CD8-positive, alpha-beta T cell (primary cell): ENCODE measurements at regions of chr5 and their contacts with region 1.

Region 1: DNA sequence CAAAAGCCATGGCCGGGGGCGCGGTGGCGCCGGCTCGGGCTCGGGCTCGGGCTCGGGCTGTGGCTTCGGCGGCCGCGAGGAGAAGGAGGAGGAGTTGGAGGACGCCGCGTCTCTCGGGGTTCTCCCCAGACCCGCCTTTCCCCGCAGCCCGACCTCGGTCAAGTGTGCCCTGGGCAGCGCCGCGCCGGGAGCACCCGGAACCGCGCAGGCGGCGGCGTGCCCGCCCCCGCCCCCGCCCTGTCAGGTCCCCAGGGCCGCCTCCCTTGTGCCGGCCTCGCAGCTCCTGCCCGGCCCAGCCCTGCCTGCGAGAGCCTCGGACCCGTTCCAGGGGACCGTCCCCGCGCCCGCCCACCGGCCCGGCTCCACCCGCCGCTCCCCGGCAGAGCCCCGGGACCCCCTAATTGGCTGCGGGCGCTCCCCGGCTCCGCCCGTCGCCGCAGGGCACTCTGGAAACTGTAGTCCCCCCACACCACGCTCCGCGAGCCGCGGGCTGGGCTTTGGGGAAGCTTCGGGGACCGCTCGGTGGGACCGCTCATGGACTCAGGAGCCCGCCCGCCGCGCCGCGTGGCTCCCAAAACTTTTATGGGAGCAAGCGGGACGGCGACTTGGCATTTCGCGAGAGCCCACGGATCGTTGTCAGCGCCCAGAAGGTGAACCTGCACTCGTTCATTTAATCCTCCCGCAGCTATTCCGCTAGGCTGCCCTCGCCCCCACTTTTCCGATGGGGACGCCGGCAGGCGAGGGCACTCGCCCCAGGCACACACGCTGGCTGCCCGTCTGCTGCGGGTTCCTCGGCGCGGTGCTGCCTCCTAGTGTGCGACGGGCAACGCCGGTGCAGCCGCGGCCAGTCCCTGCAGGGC is at the start of gene STK10:
- DNase-seq: peak; percentile 79 to 95 (median 89)
- ATAC-seq: peak; percentile 75
- H3K4me3 ChIP-seq: peak within 1 kb of the TSS; percentile 74 to 95
- H3K4me3 Mint-ChIP-seq: peak within 1 kb of the TSS; percentile 100
- H3K27ac ChIP-seq: peak within 1 kb of the TSS; percentile 84 to 97
- H3K27ac Mint-ChIP-seq: peak within 1 kb of the TSS; percentile 99
- H3K4me1 ChIP-seq: peaks cover 14% of the 10 kb centered on the region
- H3K4me1 Mint-ChIP-seq: peaks cover 32% of the 10 kb centered on the region
- H3K27me3 ChIP-seq: no peaks in the 10 kb centered on the region
- H3K27me3 Mint-ChIP-seq: no peaks in the 10 kb centered on the region
- CTCF ChIP-seq: peak; percentile 97
- total RNA-seq, gene STK10: 172 to 182 TPM

Region 2: DNA sequence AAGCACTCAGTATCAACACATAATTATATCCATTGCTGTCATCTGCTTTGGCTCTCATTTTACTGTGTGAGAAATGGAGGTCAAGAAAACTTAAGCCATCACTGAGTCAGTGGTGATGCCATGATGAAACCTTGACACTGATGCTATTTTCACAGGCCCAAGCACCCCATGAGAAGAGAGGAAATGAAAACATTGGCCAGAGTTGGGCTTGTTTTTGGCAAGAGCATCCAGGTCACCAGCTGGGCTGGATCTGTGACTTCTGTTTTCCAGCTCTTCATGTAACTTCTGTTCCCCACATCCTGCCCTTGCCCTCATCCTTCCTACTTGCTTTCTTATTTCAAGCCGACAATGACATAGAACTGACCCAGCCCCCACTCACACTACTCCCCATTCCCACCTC is 1900.7 kb before region 1 on chr5:
- CTCF ChIA-PET with region 1: no interaction called
- POLR2A ChIA-PET with region 1: no interaction called
- intact Hi-C with region 1: loop called in 1 of 2 experiments (anchors 10 kb)
- DNase-seq: peak in 1 of 9 experiments; percentile 48
- ATAC-seq: peak; percentile 3
- H3K4me3 ChIP-seq: no peak overlapping the region
- H3K4me3 Mint-ChIP-seq: peak overlapping the region; percentile 68
- H3K27ac ChIP-seq: peak overlapping the region in 1 of 2 experiments; percentile 86
- H3K27ac Mint-ChIP-seq: peak overlapping the region; percentile 97
- H3K4me1 ChIP-seq: peaks cover 99% of the 10 kb centered on the region
- H3K4me1 Mint-ChIP-seq: peaks cover 100% of the 10 kb centered on the region
- H3K27me3 ChIP-seq: no peaks in the 10 kb centered on the region
- H3K27me3 Mint-ChIP-seq: no peaks in the 10 kb centered on the region
- CTCF ChIP-seq: no peak

Region 3: GRCh38 chr5:171251519-171251918 is 936.7 kb before region 1 on chr5:
- CTCF ChIA-PET with region 1: no interaction called
- POLR2A ChIA-PET with region 1: no interaction called
- intact Hi-C with region 1: no loop called
- DNase-seq: no peak
- ATAC-seq: no peak
- H3K4me3 ChIP-seq: no peak overlapping the region
- H3K4me3 Mint-ChIP-seq: no peak overlapping the region
- H3K27ac ChIP-seq: no peak overlapping the region
- H3K27ac Mint-ChIP-seq: no peak overlapping the region
- H3K4me1 ChIP-seq: no peaks in the 10 kb centered on the region
- H3K4me1 Mint-ChIP-seq: no peaks in the 10 kb centered on the region
- H3K27me3 ChIP-seq: no peaks in the 10 kb centered on the region
- H3K27me3 Mint-ChIP-seq: peaks cover 8% of the 10 kb centered on the region
- CTCF ChIP-seq: no peak

Region 4: DNA sequence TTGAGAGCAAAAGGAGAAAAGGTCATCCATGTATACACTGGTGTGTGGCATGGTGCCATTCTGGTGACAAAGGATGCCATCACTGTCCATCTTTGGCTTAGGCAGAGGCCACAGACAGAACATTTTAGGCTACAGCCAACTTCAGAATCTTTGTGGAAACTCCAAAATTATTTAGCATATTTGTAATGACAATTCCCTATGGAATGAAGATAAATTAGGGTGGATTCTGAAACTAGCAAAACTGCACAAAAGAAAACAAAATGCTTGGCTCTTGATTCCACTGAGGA is 274.3 kb before region 1 on chr5:
- CTCF ChIA-PET with region 1: interaction called, 8 read pairs
- POLR2A ChIA-PET with region 1: no interaction called
- intact Hi-C with region 1: loop called (anchors 1 to 5 kb)
- DNase-seq: no peak
- ATAC-seq: no peak
- H3K4me3 ChIP-seq: no peak overlapping the region
- H3K4me3 Mint-ChIP-seq: no peak overlapping the region
- H3K27ac ChIP-seq: no peak overlapping the region
- H3K27ac Mint-ChIP-seq: peak overlapping the region; percentile 7
- H3K4me1 ChIP-seq: peaks cover 9% of the 10 kb centered on the region
- H3K4me1 Mint-ChIP-seq: peaks cover 45% of the 10 kb centered on the region
- H3K27me3 ChIP-seq: no peaks in the 10 kb centered on the region
- H3K27me3 Mint-ChIP-seq: no peaks in the 10 kb centered on the region
- CTCF ChIP-seq: no peak

Region 5: DNA sequence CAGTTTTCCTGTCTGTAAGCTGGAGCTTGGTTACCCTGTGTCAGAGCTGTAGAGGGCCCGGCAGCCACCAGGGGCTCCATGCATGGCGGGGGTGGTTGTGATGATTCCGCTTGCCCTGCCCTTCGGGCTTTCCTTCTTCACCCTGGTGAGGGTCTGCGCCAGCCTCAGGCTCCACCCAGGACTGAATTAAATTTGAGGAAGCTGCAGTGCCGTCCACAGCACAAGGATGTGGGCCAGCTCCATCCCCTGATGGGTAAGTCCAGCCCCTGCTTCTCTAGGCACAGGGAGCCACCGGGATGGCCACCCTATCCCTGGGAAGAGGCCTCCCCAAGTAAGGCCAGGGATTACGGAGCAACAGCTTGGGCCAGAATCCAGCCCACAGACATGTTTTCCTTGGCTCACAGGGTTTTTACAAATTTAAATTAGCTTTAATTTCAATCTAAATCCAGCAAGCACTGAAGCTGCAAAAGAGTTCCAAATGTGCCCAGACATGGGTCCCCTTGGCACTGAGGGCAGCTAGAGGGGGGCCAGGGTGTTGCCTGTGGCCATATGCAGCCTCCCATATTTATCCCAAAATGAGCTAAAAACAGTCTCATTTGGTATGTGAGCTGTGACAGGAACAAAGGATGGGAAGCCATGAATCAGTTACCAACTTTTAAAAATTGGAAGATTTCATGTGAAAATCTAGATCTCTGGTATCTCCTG is 92.6 kb before region 1 on chr5:
- CTCF ChIA-PET with region 1: interaction called, 197 read pairs
- POLR2A ChIA-PET with region 1: interaction called, 4 read pairs
- intact Hi-C with region 1: no loop called
- DNase-seq: no peak
- ATAC-seq: no peak
- H3K4me3 ChIP-seq: no peak overlapping the region
- H3K4me3 Mint-ChIP-seq: no peak overlapping the region
- H3K27ac ChIP-seq: no peak overlapping the region
- H3K27ac Mint-ChIP-seq: no peak overlapping the region
- H3K4me1 ChIP-seq: peaks cover 3% of the 10 kb centered on the region
- H3K4me1 Mint-ChIP-seq: peaks cover 10% of the 10 kb centered on the region
- H3K27me3 ChIP-seq: no peaks in the 10 kb centered on the region
- H3K27me3 Mint-ChIP-seq: no peaks in the 10 kb centered on the region
- CTCF ChIP-seq: no peak

Region 6: GRCh38 chr5:172133359-172134029 is 54.8 kb before region 1 on chr5:
- CTCF ChIA-PET with region 1: interaction called, 13 read pairs
- POLR2A ChIA-PET with region 1: interaction called, 3 read pairs
- intact Hi-C with region 1: no loop called
- DNase-seq: peak in 6 of 9 experiments; percentile 21 to 76 (median 52)
- ATAC-seq: peak; percentile 85
- H3K4me3 ChIP-seq: no peak overlapping the region
- H3K4me3 Mint-ChIP-seq: peak overlapping the region; percentile 58
- H3K27ac ChIP-seq: peak overlapping the region; percentile 1 to 70
- H3K27ac Mint-ChIP-seq: peak overlapping the region; percentile 95
- H3K4me1 ChIP-seq: peaks cover 31% of the 10 kb centered on the region
- H3K4me1 Mint-ChIP-seq: peaks cover 71% of the 10 kb centered on the region
- H3K27me3 ChIP-seq: no peaks in the 10 kb centered on the region
- H3K27me3 Mint-ChIP-seq: no peaks in the 10 kb centered on the region
- CTCF ChIP-seq: no peak

Region 7: GRCh38 chr5:172283020-172283861 is 95.0 kb after region 1 on chr5 and contains the start of gene UBTD2:
- CTCF ChIA-PET with region 1: interaction called, 7 read pairs
- POLR2A ChIA-PET with region 1: interaction called, 3 read pairs
- intact Hi-C with region 1: loop called (anchors 1 to 2 kb)
- DNase-seq: peak; percentile 44 to 85 (median 70)
- ATAC-seq: peak; percentile 76
- H3K4me3 ChIP-seq: peak within 1 kb of the TSS; percentile 76 to 78
- H3K4me3 Mint-ChIP-seq: peak within 1 kb of the TSS; percentile 88
- H3K27ac ChIP-seq: no peak within 1 kb of the TSS
- H3K27ac Mint-ChIP-seq: peak within 1 kb of the TSS; percentile 77
- H3K4me1 ChIP-seq: peaks cover 18% of the 10 kb centered on the region
- H3K4me1 Mint-ChIP-seq: peaks cover 26% of the 10 kb centered on the region
- H3K27me3 ChIP-seq: no peaks in the 10 kb centered on the region
- H3K27me3 Mint-ChIP-seq: no peaks in the 10 kb centered on the region
- CTCF ChIP-seq: peak; percentile 61
- total RNA-seq, gene UBTD2: 0.78 to 0.79 TPM

Region 8: DNA sequence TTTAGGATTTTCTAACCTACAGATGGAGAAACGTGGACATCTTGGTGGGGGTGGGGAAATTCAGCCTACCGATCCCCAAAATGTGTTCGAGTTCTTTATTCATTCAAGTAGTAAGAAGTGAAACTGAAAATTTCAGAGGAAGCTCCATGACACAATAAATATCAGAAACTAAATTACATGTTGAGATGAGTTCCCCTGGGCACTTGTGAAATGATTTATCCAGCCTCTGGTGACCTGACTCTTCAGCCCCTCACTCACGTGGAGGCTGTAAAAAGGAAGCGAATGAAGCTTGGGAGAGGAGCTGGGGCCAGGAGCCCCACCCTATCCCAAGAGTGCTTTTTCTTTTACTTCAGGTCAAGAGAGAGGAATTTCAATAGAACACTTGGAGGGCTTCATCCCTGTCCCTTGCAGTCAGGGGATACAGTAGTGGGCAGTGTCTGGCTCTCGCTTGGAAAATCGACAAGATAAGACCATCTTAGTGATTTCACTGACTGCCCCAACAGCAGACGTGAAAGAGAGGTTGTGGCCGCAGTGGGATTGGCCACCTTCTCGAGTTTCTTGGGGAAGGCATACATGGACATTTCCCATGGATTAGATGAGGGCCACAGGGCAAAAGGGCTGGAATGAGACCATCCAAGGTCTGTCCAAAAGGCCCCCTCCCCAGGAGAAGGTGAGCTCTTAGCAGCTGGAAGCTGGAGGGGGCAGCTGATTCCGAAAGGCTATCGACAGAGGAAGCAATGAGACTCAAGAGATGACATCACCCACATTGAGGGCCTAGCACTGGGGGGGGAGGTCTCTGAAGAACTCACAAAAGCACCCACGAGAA is 342.8 kb after region 1 on chr5:
- CTCF ChIA-PET with region 1: no interaction called
- POLR2A ChIA-PET with region 1: no interaction called
- intact Hi-C with region 1: no loop called
- DNase-seq: peak in 1 of 9 experiments; percentile 41
- ATAC-seq: no peak
- H3K4me3 ChIP-seq: no peak overlapping the region
- H3K4me3 Mint-ChIP-seq: no peak overlapping the region
- H3K27ac ChIP-seq: no peak overlapping the region
- H3K27ac Mint-ChIP-seq: no peak overlapping the region
- H3K4me1 ChIP-seq: no peaks in the 10 kb centered on the region
- H3K4me1 Mint-ChIP-seq: peaks cover 2% of the 10 kb centered on the region
- H3K27me3 ChIP-seq: no peaks in the 10 kb centered on the region
- H3K27me3 Mint-ChIP-seq: peaks cover 13% of the 10 kb centered on the region
- CTCF ChIP-seq: no peak